Astrocyte of the cerebellum (primary cell): ENCODE measurements at regions of chr7 and their contacts with region 1.

Region 1: DNA sequence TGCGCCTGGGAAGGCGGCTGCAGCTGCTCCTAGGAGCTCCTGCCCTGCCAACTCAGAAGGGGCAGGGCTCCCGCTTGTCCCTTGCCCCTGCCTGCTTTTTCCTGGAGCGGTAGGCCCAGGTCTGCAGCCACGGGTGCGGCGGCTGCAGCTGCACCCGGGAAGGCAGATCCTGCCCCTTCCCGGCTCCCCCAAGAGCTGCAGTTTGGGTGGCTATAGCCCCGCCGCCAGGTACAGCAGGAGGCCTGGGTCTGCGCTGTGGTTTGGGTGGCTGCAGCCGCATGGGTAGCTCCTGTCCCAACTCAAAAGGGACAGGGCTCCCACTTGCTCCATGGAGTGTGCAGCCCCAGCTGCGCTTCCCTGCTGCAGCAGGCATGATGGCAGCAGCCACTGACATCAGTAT is 6.5 kb upstream of the AUTS2 start:
- DNase-seq: no peak
- H3K4me3 ChIP-seq: no peak overlapping the region
- CTCF ChIP-seq: no peak

Region 2: DNA sequence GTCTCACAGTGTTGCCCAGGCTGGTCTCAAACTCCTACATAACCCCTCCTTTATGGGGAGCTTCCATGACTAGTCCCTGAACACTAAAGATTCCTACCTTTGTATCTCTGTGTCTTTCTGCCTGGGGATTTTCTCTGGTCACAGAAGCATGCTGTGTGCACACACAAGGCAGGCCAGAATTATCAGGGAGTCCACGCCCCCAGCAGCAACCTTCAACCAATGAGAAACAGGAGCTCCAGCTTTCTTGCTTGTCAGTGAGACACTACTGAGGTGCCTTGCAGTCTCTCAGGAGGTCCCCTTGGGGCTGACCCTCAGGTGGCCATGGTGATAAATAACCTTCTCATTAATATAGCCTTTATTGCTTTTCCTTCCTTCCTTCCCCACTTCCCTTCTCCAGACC is 38.6 kb before region 1 on chr7:
- in situ Hi-C with region 1: loop called (anchors 5 kb)
- DNase-seq: no peak
- H3K4me3 ChIP-seq: no peak overlapping the region
- CTCF ChIP-seq: no peak